Aorta (tissue), 5 donors: ENCODE measurements at regions of chr1 and their contacts with region 1.

Region 1: GRCh38 chr1:111592389-111593361 is 26.9 kb upstream of the RAP1A start:
- DNase-seq: peak; percentile 94 to 95
- ATAC-seq: peak; percentile 93
- H3K4me3 ChIP-seq: no peak overlapping the region
- H3K27ac ChIP-seq: peak overlapping the region; percentile 95 to 96
- H3K4me1 ChIP-seq: peaks cover 2 to 11% of the 10 kb centered on the region in 2 donors
- H3K27me3 ChIP-seq: no peaks in the 10 kb centered on the region

Region 2: DNA sequence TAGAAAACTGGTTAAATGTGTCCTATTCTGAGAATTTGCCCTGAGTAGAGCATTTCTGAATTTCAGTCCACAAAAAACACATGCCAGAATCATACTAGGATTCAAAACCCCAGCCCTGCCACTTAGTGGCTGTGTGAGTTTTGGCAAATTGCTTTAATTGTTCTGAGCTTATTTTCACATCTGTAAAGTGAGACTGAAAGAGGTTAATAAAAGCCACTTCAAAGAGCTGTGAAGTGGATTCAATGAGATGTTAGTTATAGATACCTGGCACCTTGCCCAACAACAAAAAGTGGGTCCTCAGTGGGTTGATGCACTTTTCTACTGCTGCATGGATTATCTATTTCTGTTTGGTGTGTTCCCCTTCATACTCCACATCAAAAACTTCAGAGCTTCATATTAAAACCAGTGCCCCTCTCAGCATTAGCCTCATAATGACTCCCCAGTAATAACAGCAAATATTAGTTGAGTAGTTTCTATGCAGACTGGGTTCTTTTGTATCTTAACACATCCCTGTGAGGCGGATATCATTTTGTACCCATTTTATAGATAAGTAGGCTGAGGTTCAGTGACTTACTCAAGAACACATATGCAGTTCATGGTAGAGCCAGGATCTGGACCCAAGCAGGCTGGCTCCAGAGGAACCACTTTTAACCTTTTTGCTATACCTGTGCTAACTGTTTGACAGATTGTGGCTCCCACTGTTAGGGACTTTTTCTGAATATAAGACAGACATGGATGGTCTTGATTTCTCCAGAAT is 75.0 kb before region 1 on chr1:
- intact Hi-C with region 1: no loop called
- DNase-seq: no peak
- ATAC-seq: no peak
- H3K4me3 ChIP-seq: no peak overlapping the region
- H3K27ac ChIP-seq: no peak overlapping the region
- H3K4me1 ChIP-seq: no peaks in the 10 kb centered on the region
- H3K27me3 ChIP-seq: no peaks in the 10 kb centered on the region

Region 3: DNA sequence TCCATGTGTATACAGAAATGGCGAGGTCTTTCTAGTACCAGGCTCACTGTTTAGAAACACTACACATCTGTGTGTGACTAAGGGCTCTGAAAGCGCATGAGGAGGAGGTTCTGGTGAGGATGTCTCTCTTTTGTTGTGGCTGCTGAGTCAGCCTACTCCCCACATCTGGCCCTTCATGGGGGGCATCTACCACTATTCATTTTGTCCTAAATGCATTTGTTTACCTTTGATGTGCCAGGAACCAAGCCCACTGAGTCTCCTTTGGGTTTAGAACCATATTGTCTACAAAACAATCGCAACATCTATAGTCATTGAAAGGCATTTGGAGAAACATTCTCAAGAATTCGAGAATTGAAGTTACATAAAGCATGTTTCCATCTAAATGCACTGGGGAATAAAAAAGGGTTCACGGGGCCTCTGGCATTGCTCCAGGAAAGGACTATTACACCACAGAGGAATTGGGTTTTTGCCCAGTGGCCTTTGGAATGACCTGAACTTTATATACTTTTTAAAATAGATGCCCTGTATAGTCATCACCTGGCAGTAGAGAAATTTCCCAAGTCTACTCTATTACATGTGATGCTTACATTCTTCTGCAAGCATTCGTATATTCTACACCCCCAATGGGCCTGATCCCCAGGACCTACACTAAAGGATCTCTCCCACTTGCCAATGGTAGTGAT is 54.2 kb before region 1 on chr1:
- intact Hi-C with region 1: loop called (anchors 5 kb)
- DNase-seq: no peak
- ATAC-seq: no peak
- H3K4me3 ChIP-seq: no peak overlapping the region
- H3K27ac ChIP-seq: no peak overlapping the region
- H3K4me1 ChIP-seq: peaks cover 3 to 10% of the 10 kb centered on the region in 2 donors
- H3K27me3 ChIP-seq: no peaks in the 10 kb centered on the region